Heart right ventricle (tissue), 16 donors: ENCODE measurements at regions of chr7 and their contacts with region 1.

Region 1: GRCh38 chr7:121298831-121299239 is 30.0 kb upstream of the WNT16 start:
- DNase-seq: no peak
- ATAC-seq: no peak
- H3K4me3 ChIP-seq: no peak overlapping the region
- H3K27ac ChIP-seq: no peak overlapping the region
- H3K4me1 ChIP-seq: no peaks in the 10 kb centered on the region
- H3K27me3 ChIP-seq: no peaks in the 10 kb centered on the region
- CTCF ChIP-seq: no peak

Region 2: GRCh38 chr7:122546496-122546895 is 1247.7 kb after region 1 on chr7:
- intact Hi-C with region 1: loop called in 1 of 10 experiments (anchors 5 kb)
- DNase-seq: no peak
- ATAC-seq: no peak
- H3K4me3 ChIP-seq: no peak overlapping the region
- H3K27ac ChIP-seq: no peak overlapping the region
- H3K4me1 ChIP-seq: peaks cover 0 to 7% (median 0%) of the 10 kb centered on the region in 9 donors
- H3K27me3 ChIP-seq: no peaks in the 10 kb centered on the region
- CTCF ChIP-seq: no peak